ENCODE measurements at regions of chr19 and their contacts with region 1.

Region 1: GRCh38 chr19:2050991-2051772 is at the start of gene MKNK2:
- DNase-seq: peak; percentile 97
- ATAC-seq: peak; percentile 65
- H3K4me3 ChIP-seq: peak within 1 kb of the TSS; percentile 62 to 98 (median 94)
- H3K4me3 Mint-ChIP-seq: peak within 1 kb of the TSS; percentile 99
- H3K27ac ChIP-seq: peak within 1 kb of the TSS; percentile 99
- H3K27ac Mint-ChIP-seq: peak within 1 kb of the TSS; percentile 98
- H3K4me1 ChIP-seq: peaks cover 79 to 85% of the 10 kb centered on the region in 2 donors
- H3K4me1 Mint-ChIP-seq: peaks cover 67% of the 10 kb centered on the region
- H3K27me3 ChIP-seq: no peaks in the 10 kb centered on the region
- H3K27me3 Mint-ChIP-seq: no peaks in the 10 kb centered on the region
- CTCF ChIP-seq: peak; percentile 45
- total RNA-seq, gene MKNK2: 777 and 813 TPM in 2 replicates

Region 2: DNA sequence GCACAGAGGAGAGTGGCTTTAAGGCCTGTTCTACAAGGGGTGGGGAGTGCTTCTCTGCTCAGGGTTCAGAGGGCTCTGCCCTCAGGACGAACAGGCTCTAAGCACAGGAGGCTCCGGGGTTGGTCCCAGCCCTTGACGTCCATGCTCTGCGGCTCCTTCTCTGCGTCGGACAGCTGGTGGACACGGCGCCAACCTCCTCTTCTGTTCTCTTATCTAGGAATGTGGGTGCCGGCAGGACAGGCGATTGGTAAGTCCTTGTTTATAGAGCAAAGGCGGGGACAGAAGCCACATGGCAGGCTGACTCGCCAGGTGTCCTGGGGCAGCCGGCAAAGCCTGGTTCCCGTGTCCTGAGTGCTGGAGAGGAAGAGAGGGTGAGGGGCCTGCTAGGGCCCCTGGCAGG is 621.4 kb before region 1 on chr19:
- CTCF ChIA-PET with region 1: no interaction called
- POLR2A ChIA-PET with region 1: no interaction called
- intact Hi-C with region 1: no loop called
- DNase-seq: no peak
- ATAC-seq: no peak
- H3K4me3 ChIP-seq: no peak overlapping the region
- H3K4me3 Mint-ChIP-seq: no peak overlapping the region
- H3K27ac ChIP-seq: no peak overlapping the region
- H3K27ac Mint-ChIP-seq: no peak overlapping the region
- H3K4me1 ChIP-seq: no peaks in the 10 kb centered on the region
- H3K4me1 Mint-ChIP-seq: no peaks in the 10 kb centered on the region
- H3K27me3 ChIP-seq: no peaks in the 10 kb centered on the region
- H3K27me3 Mint-ChIP-seq: no peaks in the 10 kb centered on the region
- CTCF ChIP-seq: no peak

Region 3: GRCh38 chr19:1992759-1993260 is 58.4 kb before region 1 on chr19:
- CTCF ChIA-PET with region 1: no interaction called
- POLR2A ChIA-PET with region 1: no interaction called
- intact Hi-C with region 1: no loop called
- DNase-seq: no peak
- ATAC-seq: no peak
- H3K4me3 ChIP-seq: no peak overlapping the region
- H3K4me3 Mint-ChIP-seq: no peak overlapping the region
- H3K27ac ChIP-seq: no peak overlapping the region
- H3K27ac Mint-ChIP-seq: no peak overlapping the region
- H3K4me1 ChIP-seq: no peaks in the 10 kb centered on the region
- H3K4me1 Mint-ChIP-seq: peaks cover 5% of the 10 kb centered on the region
- H3K27me3 ChIP-seq: no peaks in the 10 kb centered on the region
- H3K27me3 Mint-ChIP-seq: no peaks in the 10 kb centered on the region
- CTCF ChIP-seq: no peak

Region 4: GRCh38 chr19:2032296-2032941 is 18.8 kb before region 1 on chr19:
- CTCF ChIA-PET with region 1: interaction called, 3 read pairs
- POLR2A ChIA-PET with region 1: interaction called, 11 read pairs
- intact Hi-C with region 1: loop called (anchors 2 kb)
- DNase-seq: peak; percentile 54
- ATAC-seq: peak; percentile 50
- H3K4me3 ChIP-seq: peak overlapping the region in 2 of 5 experiments; percentile 9 to 50
- H3K4me3 Mint-ChIP-seq: peak overlapping the region; percentile 63
- H3K27ac ChIP-seq: peak overlapping the region; percentile 16 to 29
- H3K27ac Mint-ChIP-seq: peak overlapping the region; percentile 62
- H3K4me1 ChIP-seq: peaks cover 17 to 34% of the 10 kb centered on the region in 2 donors
- H3K4me1 Mint-ChIP-seq: peaks cover 26% of the 10 kb centered on the region
- H3K27me3 ChIP-seq: no peaks in the 10 kb centered on the region
- H3K27me3 Mint-ChIP-seq: no peaks in the 10 kb centered on the region
- CTCF ChIP-seq: no peak

Region 5: GRCh38 chr19:2061495-2062381 is 10.6 kb after region 1 on chr19:
- CTCF ChIA-PET with region 1: interaction called, 3 read pairs
- POLR2A ChIA-PET with region 1: interaction called, 41 read pairs
- intact Hi-C with region 1: loop called (anchors 1 kb)
- DNase-seq: peak; percentile 99
- ATAC-seq: peak; percentile 92
- H3K4me3 ChIP-seq: peak overlapping the region; percentile 8 to 94 (median 84)
- H3K4me3 Mint-ChIP-seq: peak overlapping the region; percentile 95
- H3K27ac ChIP-seq: peak overlapping the region; percentile 92 to 97
- H3K27ac Mint-ChIP-seq: peak overlapping the region; percentile 95
- H3K4me1 ChIP-seq: peaks cover 30 to 67% of the 10 kb centered on the region in 2 donors
- H3K4me1 Mint-ChIP-seq: peaks cover 44% of the 10 kb centered on the region
- H3K27me3 ChIP-seq: no peaks in the 10 kb centered on the region
- H3K27me3 Mint-ChIP-seq: no peaks in the 10 kb centered on the region
- CTCF ChIP-seq: no peak

Region 6: GRCh38 chr19:2070436-2070827 is 19.2 kb after region 1 on chr19:
- CTCF ChIA-PET with region 1: interaction called, 4 read pairs
- POLR2A ChIA-PET with region 1: interaction called, 24 read pairs
- intact Hi-C with region 1: loop called (anchors 2 kb)
- DNase-seq: no peak
- ATAC-seq: no peak
- H3K4me3 ChIP-seq: no peak overlapping the region
- H3K4me3 Mint-ChIP-seq: no peak overlapping the region
- H3K27ac ChIP-seq: peak overlapping the region in 1 of 2 donors; percentile 64
- H3K27ac Mint-ChIP-seq: peak overlapping the region; percentile 10
- H3K4me1 ChIP-seq: peaks cover 30 to 57% of the 10 kb centered on the region in 2 donors
- H3K4me1 Mint-ChIP-seq: peaks cover 54% of the 10 kb centered on the region
- H3K27me3 ChIP-seq: no peaks in the 10 kb centered on the region
- H3K27me3 Mint-ChIP-seq: no peaks in the 10 kb centered on the region
- CTCF ChIP-seq: no peak

Region 7: DNA sequence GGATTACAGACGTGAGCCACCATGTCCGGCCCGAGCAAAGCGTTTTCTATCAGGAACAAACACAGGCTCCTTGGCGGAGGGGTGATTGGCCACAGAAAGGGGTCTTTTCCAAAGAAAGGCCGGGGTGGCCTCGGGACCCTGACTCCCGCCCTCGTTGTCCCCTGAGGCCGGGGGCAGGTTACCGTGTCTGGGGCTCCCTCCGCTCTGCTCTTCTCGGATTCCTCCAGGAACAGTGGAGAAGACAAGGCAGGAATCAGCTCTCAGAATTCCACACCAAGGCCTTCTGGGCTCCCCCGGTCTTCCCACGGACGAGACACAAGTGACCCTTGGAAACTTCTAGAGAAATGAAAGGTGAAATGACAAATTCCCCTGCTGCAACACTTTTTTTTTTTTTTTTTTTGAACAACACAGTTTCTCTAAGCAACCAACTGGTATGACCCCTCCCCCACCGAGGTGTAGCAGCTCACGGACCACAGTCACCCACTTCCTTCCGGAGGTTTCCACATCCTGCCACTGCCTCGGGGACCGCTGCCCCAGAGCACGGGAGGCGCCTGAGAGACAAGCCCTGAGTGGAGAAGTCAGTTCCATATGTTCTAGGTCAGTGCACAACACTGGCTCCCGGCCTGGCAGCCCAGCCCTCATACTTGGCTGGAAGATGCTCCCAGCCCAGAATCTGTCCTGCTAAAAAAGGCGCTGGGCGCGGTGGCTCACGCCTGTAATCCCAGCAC is 34.0 kb after region 1 on chr19:
- CTCF ChIA-PET with region 1: interaction called, 51 read pairs
- POLR2A ChIA-PET with region 1: interaction called, 123 read pairs
- intact Hi-C with region 1: loop called (anchors 1 kb)
- DNase-seq: peak; percentile 97
- ATAC-seq: peak; percentile 29
- H3K4me3 ChIP-seq: peak overlapping the region; percentile 87 to 100 (median 98)
- H3K4me3 Mint-ChIP-seq: peak overlapping the region; percentile 92
- H3K27ac ChIP-seq: peak overlapping the region; percentile 96 to 99
- H3K27ac Mint-ChIP-seq: peak overlapping the region; percentile 99
- H3K4me1 ChIP-seq: peaks cover 74 to 81% of the 10 kb centered on the region in 2 donors
- H3K4me1 Mint-ChIP-seq: peaks cover 79% of the 10 kb centered on the region
- H3K27me3 ChIP-seq: no peaks in the 10 kb centered on the region
- H3K27me3 Mint-ChIP-seq: no peaks in the 10 kb centered on the region
- CTCF ChIP-seq: no peak

Region 8: GRCh38 chr19:2113439-2114211 is 62.4 kb after region 1 on chr19:
- CTCF ChIA-PET with region 1: no interaction called
- POLR2A ChIA-PET with region 1: no interaction called
- intact Hi-C with region 1: no loop called
- DNase-seq: no peak
- ATAC-seq: no peak
- H3K4me3 ChIP-seq: no peak overlapping the region
- H3K4me3 Mint-ChIP-seq: no peak overlapping the region
- H3K27ac ChIP-seq: no peak overlapping the region
- H3K27ac Mint-ChIP-seq: no peak overlapping the region
- H3K4me1 ChIP-seq: no peaks in the 10 kb centered on the region
- H3K4me1 Mint-ChIP-seq: peaks cover 2% of the 10 kb centered on the region
- H3K27me3 ChIP-seq: no peaks in the 10 kb centered on the region
- H3K27me3 Mint-ChIP-seq: no peaks in the 10 kb centered on the region
- CTCF ChIP-seq: no peak

Measured in B cell (primary cell).